GM12878 (cell line): ENCODE measurements at regions of chr1 and their contacts with region 1.

Region 1: DNA sequence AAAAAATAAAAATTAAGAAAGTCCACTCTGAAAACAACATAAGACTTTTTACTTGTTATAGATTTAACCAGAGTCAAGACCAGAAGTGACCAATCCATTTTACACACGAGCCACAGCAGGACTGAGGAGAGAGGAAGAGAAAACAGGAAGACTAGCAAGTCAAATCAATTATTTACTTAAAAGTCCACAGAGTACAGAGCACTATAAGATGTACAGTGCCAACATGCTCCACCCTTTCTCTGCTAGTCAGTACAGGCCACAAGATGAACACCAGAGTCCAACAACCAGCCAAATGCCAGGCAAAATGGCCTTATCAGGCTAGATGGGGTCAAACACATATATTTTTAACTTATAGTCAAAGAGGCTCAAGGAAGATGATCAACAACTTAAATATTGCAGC is 19.5 kb downstream of the LUZP1 start:
- DNase-seq: peak; percentile 34
- ATAC-seq: peak; percentile 94
- H3K4me3 ChIP-seq: no peak overlapping the region
- H3K27ac ChIP-seq: no peak overlapping the region
- H3K4me1 ChIP-seq: no peaks in the 10 kb centered on the region
- H3K27me3 ChIP-seq: no peaks in the 10 kb centered on the region
- CTCF ChIP-seq: no peak
- EP300 ChIP-seq: no peak
- POLR2A ChIP-seq: no peak
- RAD21 ChIP-seq: no peak

Region 2: DNA sequence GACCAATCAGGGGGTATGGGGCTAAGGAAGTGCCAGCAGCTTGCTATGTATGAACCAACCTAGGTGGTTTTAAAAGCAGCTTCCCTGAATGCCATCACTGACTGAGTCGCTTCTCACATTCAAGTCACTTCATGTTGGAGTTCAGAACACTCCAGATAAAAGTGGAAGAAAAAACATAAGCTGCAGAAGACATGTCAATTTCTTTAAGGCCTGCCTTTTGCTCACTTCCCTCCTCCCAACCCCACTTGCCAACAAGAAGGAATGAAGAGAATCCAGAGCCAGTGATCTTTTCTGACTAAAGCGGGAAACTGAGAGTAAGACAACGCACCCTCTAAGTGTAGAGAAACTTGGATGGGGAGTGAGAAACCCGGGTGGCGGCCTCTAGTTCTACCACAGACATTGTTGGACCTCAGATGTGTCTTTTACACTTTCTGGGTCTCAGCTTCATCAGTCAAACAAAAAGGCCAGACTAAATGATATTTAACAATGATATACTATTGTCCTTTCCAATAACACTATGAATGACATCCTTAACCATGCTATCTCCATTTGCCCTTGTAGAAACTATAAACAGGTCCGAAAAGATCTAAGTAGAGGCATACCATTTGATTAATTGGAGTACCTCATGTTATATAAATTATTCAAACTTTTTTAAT is 34.6 kb before region 1 on chr1:
- CTCF ChIA-PET with region 1: interaction called, 4 read pairs
- POLR2A ChIA-PET with region 1: no interaction called
- RAD21 ChIA-PET with region 1: interaction called, 4 read pairs
- SMC1A ChIA-PET with region 1: interaction called, 13 read pairs
- in situ Hi-C with region 1: no loop called
- intact Hi-C with region 1: no loop called
- DNase-seq: no peak
- ATAC-seq: peak; percentile 59
- H3K4me3 ChIP-seq: peak overlapping the region; percentile 9; the same call in 1 of the 2 replicates
- H3K27ac ChIP-seq: peak overlapping the region; percentile 64
- H3K4me1 ChIP-seq: peaks cover 54% of the 10 kb centered on the region
- H3K27me3 ChIP-seq: no peaks in the 10 kb centered on the region
- CTCF ChIP-seq: no peak
- EP300 ChIP-seq: no peak
- POLR2A ChIP-seq: no peak
- RAD21 ChIP-seq: no peak

Region 3: DNA sequence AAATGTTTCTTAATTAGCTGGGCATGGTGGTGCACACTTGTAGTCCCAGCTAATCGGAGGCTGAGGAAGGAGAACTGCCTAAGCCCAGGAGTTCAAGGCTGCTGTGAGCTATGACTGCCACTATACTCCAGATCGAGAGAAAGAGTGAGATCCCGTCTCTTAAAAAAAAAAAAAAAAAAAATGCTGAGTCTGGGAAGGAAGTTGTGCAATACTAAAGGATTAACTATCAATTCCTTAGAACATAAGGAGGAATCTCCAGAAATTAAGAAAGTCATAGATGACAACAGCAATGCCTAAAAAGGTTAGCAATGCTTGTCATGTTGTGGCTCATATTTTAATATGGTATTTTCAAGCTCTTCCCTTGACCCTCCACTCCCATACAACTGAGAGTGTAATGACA is 14.3 kb after region 1 on chr1:
- CTCF ChIA-PET with region 1: interaction called, 11 read pairs
- POLR2A ChIA-PET with region 1: interaction called, 4 read pairs
- RAD21 ChIA-PET with region 1: interaction called, 6 read pairs
- SMC1A ChIA-PET with region 1: interaction called, 3 read pairs
- in situ Hi-C with region 1: no loop called
- intact Hi-C with region 1: no loop called
- DNase-seq: no peak
- ATAC-seq: no peak
- H3K4me3 ChIP-seq: no peak overlapping the region
- H3K27ac ChIP-seq: no peak overlapping the region
- H3K4me1 ChIP-seq: no peaks in the 10 kb centered on the region
- H3K27me3 ChIP-seq: no peaks in the 10 kb centered on the region
- CTCF ChIP-seq: no peak
- EP300 ChIP-seq: no peak
- POLR2A ChIP-seq: no peak
- RAD21 ChIP-seq: no peak